ENCODE measurements at regions of chr22 and their contacts with region 1.

Region 1: GRCh38 chr22:24423519-24424000 is 3.8 kb upstream of the ADORA2A start:
- DNase-seq: peak; percentile 33 to 82 (median 60)
- ATAC-seq: no peak
- H3K4me3 ChIP-seq: peak overlapping the region in 1 of 2 experiments; percentile 47
- H3K4me3 Mint-ChIP-seq: peak overlapping the region; percentile 72
- H3K27ac ChIP-seq: no peak overlapping the region
- H3K27ac Mint-ChIP-seq: no peak overlapping the region
- H3K4me1 ChIP-seq: peaks cover 32% of the 10 kb centered on the region
- H3K4me1 Mint-ChIP-seq: peaks cover 39% of the 10 kb centered on the region
- H3K27me3 ChIP-seq: no peaks in the 10 kb centered on the region
- H3K27me3 Mint-ChIP-seq: no peaks in the 10 kb centered on the region
- CTCF ChIP-seq: peak; percentile 89

Region 2: DNA sequence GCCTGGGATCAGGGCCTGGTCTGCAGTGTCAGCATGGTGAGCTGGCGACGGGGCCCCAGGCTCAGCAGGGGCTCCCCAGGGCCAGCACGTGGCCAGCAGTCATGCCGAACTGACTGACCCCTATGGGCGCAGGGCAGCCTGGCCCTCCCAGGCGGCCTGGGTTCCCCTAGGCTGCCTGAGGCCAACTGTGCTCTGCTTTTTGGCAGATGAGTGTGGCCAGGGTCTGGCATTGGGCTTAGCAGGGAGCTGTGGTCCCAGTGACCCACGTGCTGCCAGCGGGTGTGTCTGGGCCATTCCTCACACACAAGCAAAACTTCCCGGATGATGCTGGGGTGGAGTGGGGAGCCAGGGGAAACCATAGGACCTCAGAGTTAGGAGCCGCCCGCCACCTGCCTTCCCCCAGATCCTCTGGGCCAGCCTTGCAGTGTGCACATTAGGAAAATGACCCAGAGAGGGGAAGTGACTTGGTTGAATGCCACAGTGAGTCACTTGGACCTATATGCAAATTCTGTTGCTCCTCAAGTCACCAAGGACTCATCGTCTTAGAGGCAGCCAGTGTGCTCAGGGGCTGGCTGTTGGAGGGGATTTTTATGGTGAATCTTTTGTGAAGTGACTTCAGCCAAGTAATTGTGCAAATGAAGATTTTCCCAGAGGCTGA is 10.4 kb after region 1 on chr22:
- CTCF ChIA-PET with region 1: interaction called, 14 read pairs
- POLR2A ChIA-PET with region 1: interaction called, 19 read pairs
- intact Hi-C with region 1: loop called (anchors 1 kb)
- DNase-seq: no peak
- ATAC-seq: peak; percentile 53
- H3K4me3 ChIP-seq: peak overlapping the region in 1 of 2 experiments; percentile 6
- H3K4me3 Mint-ChIP-seq: peak overlapping the region; percentile 73
- H3K27ac ChIP-seq: peak overlapping the region; percentile 55 to 92
- H3K27ac Mint-ChIP-seq: peak overlapping the region; percentile 94
- H3K4me1 ChIP-seq: peaks cover 99% of the 10 kb centered on the region
- H3K4me1 Mint-ChIP-seq: peaks cover 90% of the 10 kb centered on the region
- H3K27me3 ChIP-seq: no peaks in the 10 kb centered on the region
- H3K27me3 Mint-ChIP-seq: no peaks in the 10 kb centered on the region
- CTCF ChIP-seq: no peak

Region 3: GRCh38 chr22:24486501-24486921 is 63.0 kb after region 1 on chr22:
- CTCF ChIA-PET with region 1: interaction called, 14 read pairs
- POLR2A ChIA-PET with region 1: no interaction called
- intact Hi-C with region 1: loop called (anchors 1 kb)
- DNase-seq: no peak
- ATAC-seq: no peak
- H3K4me3 ChIP-seq: no peak overlapping the region
- H3K4me3 Mint-ChIP-seq: no peak overlapping the region
- H3K27ac ChIP-seq: no peak overlapping the region
- H3K27ac Mint-ChIP-seq: no peak overlapping the region
- H3K4me1 ChIP-seq: no peaks in the 10 kb centered on the region
- H3K4me1 Mint-ChIP-seq: peaks cover 8% of the 10 kb centered on the region
- H3K27me3 ChIP-seq: no peaks in the 10 kb centered on the region
- H3K27me3 Mint-ChIP-seq: no peaks in the 10 kb centered on the region
- CTCF ChIP-seq: no peak

Region 4: DNA sequence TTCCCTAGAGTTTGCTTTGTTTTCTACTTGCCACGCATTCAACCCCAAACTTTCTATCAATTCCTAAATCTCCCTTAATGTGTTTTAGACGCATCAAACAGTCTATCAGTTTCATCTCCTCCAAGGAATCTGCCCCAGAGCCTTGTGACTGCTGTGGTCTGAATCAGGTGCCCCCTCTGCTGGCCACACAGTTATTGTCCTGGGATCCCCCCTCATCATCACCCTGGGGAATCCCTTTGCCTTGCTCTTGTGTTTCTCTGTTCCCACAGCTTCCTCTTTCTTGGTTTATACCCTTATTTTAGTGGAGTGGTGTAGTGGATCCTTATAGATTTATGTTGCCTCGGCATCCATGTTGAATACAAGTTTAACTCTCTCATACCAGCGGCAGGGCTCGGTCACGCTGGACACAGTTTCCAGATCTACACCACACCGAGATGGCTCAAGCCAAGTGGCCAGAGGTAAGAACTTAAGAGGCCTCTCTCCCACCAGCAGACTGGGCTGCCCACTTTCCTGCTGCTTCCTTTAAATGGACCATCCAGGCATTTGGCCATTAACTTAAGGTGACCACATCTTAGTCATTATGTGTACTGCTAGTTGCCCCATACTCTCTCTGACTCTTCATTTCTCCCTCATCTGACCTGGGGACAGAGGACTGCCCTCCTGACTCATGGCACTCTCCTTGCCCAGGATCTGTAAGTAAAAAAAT is 79.7 kb after region 1 on chr22:
- CTCF ChIA-PET with region 1: interaction called, 30 read pairs
- POLR2A ChIA-PET with region 1: no interaction called
- intact Hi-C with region 1: loop called (anchors 1 kb)
- DNase-seq: peak; percentile 28 to 79 (median 66)
- ATAC-seq: peak; percentile 88
- H3K4me3 ChIP-seq: no peak overlapping the region
- H3K4me3 Mint-ChIP-seq: no peak overlapping the region
- H3K27ac ChIP-seq: no peak overlapping the region
- H3K27ac Mint-ChIP-seq: no peak overlapping the region
- H3K4me1 ChIP-seq: peaks cover 6% of the 10 kb centered on the region
- H3K4me1 Mint-ChIP-seq: peaks cover 9% of the 10 kb centered on the region
- H3K27me3 ChIP-seq: no peaks in the 10 kb centered on the region
- H3K27me3 Mint-ChIP-seq: no peaks in the 10 kb centered on the region
- CTCF ChIP-seq: peak; percentile 57

Region 5: GRCh38 chr22:24525416-24526037 is 102.0 kb after region 1 on chr22:
- CTCF ChIA-PET with region 1: interaction called, 23 read pairs
- POLR2A ChIA-PET with region 1: interaction called, 3 read pairs
- intact Hi-C with region 1: loop called (anchors 1 kb)
- DNase-seq: peak; percentile 58 to 85 (median 72)
- ATAC-seq: peak; percentile 96
- H3K4me3 ChIP-seq: no peak overlapping the region
- H3K4me3 Mint-ChIP-seq: no peak overlapping the region
- H3K27ac ChIP-seq: no peak overlapping the region
- H3K27ac Mint-ChIP-seq: no peak overlapping the region
- H3K4me1 ChIP-seq: no peaks in the 10 kb centered on the region
- H3K4me1 Mint-ChIP-seq: peaks cover 9% of the 10 kb centered on the region
- H3K27me3 ChIP-seq: no peaks in the 10 kb centered on the region
- H3K27me3 Mint-ChIP-seq: no peaks in the 10 kb centered on the region
- CTCF ChIP-seq: peak; percentile 92

Region 6: DNA sequence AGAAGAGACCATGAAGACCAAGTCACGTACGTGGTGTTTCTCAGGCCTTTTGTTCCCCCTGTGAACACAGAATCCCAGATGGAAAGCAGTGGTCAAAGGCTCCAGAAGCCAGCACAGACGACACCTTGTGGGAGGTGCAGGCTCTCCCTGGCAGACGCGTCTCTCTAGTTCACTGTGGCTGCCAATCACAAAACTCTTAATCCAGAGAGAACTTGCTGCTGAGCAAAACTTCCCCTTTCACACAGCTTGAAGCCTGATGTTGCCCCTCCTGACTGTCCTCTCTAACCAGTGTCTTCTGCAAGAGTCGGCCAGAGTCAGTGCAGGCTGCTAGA is 283.9 kb after region 1 on chr22:
- CTCF ChIA-PET with region 1: no interaction called
- POLR2A ChIA-PET with region 1: no interaction called
- intact Hi-C with region 1: no loop called
- DNase-seq: no peak
- ATAC-seq: no peak
- H3K4me3 ChIP-seq: no peak overlapping the region
- H3K4me3 Mint-ChIP-seq: no peak overlapping the region
- H3K27ac ChIP-seq: no peak overlapping the region
- H3K27ac Mint-ChIP-seq: no peak overlapping the region
- H3K4me1 ChIP-seq: no peaks in the 10 kb centered on the region
- H3K4me1 Mint-ChIP-seq: no peaks in the 10 kb centered on the region
- H3K27me3 ChIP-seq: peaks cover 0 to 3% of the 10 kb centered on the region in 2 experiments
- H3K27me3 Mint-ChIP-seq: peaks cover 8% of the 10 kb centered on the region
- CTCF ChIP-seq: no peak

Region 7: DNA sequence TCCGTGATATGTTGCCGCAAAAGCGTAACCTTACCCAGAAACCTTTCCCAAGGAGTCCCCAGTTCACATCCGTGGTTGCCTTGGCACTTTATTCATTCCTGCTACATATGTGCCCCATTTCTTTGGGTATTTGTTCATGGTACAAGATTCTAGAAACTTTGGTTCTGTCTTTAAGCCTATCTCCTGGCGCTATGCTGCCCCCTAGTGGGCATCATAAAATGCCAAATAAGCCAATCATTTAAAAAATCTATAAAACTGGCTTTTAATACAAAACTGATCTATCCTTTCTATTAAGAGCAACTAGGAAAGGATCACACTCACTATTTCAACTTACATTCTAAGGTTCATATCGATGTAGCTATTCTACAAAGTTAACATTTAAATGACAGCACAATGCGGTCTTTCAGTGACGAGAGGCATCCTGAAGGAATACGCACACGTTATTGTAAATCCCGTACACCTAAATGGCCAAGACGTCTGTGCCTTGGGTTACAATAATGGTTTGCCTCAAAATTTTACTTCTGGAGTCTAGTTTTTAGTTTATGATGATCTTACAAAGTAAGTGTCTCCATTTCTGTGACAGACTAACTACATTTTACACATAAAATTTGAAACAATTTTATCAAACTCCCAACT is 334.7 kb after region 1 on chr22:
- CTCF ChIA-PET with region 1: no interaction called
- POLR2A ChIA-PET with region 1: no interaction called
- intact Hi-C with region 1: loop called in 1 of 2 experiments (anchors 5 kb)
- DNase-seq: peak; percentile 7 to 71 (median 56)
- ATAC-seq: no peak
- H3K4me3 ChIP-seq: no peak overlapping the region
- H3K4me3 Mint-ChIP-seq: no peak overlapping the region
- H3K27ac ChIP-seq: no peak overlapping the region
- H3K27ac Mint-ChIP-seq: no peak overlapping the region
- H3K4me1 ChIP-seq: no peaks in the 10 kb centered on the region
- H3K4me1 Mint-ChIP-seq: no peaks in the 10 kb centered on the region
- H3K27me3 ChIP-seq: no peaks in the 10 kb centered on the region
- H3K27me3 Mint-ChIP-seq: no peaks in the 10 kb centered on the region
- CTCF ChIP-seq: peak; percentile 90

Measured in CD8-positive, alpha-beta T cell (primary cell).